Gastrocnemius medialis (tissue), 4 donors: ENCODE measurements at regions of chr6 and their contacts with region 1.

Region 1: DNA sequence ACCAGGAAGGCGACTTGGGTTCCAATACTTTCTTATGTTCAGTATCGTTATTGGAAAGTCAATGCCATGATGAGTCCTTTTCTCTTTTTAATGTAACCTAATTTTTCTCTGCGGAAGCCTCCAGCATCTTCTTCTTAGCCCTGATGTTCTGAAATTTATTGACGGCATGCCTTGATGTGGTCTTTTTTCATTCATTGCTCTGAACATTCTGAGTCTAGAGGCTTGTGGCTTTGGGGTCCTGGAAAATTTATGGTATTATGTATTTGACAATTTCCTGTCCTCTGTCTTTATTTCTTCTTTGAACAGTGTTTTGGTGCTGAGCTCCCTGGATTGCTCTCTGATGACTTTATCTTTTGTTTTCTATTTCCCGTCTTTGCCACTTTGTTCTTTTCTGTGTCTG is 28.7 kb upstream of the MAS1 start:
- DNase-seq: no peak
- ATAC-seq: no peak
- H3K4me3 ChIP-seq: no peak overlapping the region
- H3K27ac ChIP-seq: no peak overlapping the region
- H3K4me1 ChIP-seq: peaks cover 0 to 3% of the 10 kb centered on the region in 2 donors
- H3K27me3 ChIP-seq: no peaks in the 10 kb centered on the region
- CTCF ChIP-seq: no peak
- POLR2A ChIP-seq: no peak

Region 2: GRCh38 chr6:158808941-158809678 is 1053.0 kb before region 1 on chr6:
- in situ Hi-C with region 1: no loop called
- intact Hi-C with region 1: no loop called
- DNase-seq: no peak
- ATAC-seq: peak in 1 of 2 donors; percentile 43
- H3K4me3 ChIP-seq: no peak overlapping the region
- H3K27ac ChIP-seq: no peak overlapping the region
- H3K4me1 ChIP-seq: peaks cover 0 to 15% of the 10 kb centered on the region in 2 donors
- H3K27me3 ChIP-seq: no peaks in the 10 kb centered on the region
- CTCF ChIP-seq: no peak
- POLR2A ChIP-seq: no peak

Region 3: DNA sequence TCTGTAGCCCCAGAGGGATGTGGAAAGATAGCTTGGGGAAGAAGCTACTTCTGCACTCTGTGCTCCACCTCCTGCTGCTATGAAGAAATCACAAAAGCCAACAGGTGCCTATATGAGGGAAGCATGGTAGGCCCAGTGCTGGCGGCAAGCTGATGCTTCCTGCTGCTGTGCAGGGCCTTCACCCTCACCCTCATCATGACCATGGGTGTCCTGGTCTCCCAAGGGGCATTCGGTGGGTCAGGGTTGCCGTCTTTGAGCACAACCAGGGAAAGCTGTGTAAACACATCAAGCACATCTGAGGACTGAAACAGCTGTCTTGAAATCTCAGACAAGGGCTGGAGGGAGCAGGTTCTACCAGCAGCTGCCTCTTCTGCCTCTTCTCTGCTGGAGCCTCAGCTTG is 508.9 kb before region 1 on chr6:
- in situ Hi-C with region 1: no loop called
- intact Hi-C with region 1: no loop called
- DNase-seq: no peak
- ATAC-seq: no peak
- H3K4me3 ChIP-seq: no peak overlapping the region
- H3K27ac ChIP-seq: no peak overlapping the region
- H3K4me1 ChIP-seq: no peaks in the 10 kb centered on the region
- H3K27me3 ChIP-seq: peaks cover 0 to 4% (median 0%) of the 10 kb centered on the region in 3 donors
- CTCF ChIP-seq: no peak
- POLR2A ChIP-seq: no peak

Region 4: DNA sequence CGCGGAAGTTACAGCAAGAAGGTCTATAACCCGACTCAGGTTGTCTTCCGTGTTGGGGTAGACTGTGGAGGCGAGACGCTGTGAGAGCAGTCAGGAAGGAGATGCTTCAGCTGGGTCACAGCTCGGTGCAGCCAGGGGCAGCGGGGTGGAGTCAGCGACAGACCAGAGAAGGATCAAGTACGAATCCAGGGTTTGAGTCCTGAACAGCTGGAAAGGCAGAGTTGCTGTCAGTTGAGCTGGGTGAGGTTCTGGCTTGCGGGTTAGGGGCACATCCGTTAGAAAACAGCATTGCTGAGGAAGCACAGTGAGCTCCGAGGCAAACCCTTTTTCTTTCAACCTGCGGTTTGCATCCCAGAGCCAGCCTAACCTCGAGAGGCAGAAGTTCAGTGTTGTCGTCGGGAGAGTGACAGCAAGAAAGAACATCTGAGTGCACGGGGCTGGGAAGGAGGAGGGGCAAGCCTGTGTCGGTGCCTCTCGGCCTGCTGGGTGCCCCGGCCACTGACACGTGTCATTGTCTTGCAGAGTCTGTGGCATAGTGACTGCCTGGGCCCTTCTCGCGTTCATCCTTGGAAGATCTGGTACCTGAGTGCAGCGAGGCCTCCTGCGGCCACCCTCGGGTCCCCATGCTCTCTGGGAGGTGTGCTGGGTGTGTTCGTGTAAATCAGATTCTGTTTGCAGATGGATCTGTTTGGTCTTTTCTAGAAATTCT is 42.0 kb before region 1 on chr6:
- in situ Hi-C with region 1: no loop called
- intact Hi-C with region 1: no loop called
- DNase-seq: no peak
- ATAC-seq: no peak
- H3K4me3 ChIP-seq: no peak overlapping the region
- H3K27ac ChIP-seq: no peak overlapping the region
- H3K4me1 ChIP-seq: no peaks in the 10 kb centered on the region
- H3K27me3 ChIP-seq: no peaks in the 10 kb centered on the region
- CTCF ChIP-seq: no peak
- POLR2A ChIP-seq: no peak

Region 5: DNA sequence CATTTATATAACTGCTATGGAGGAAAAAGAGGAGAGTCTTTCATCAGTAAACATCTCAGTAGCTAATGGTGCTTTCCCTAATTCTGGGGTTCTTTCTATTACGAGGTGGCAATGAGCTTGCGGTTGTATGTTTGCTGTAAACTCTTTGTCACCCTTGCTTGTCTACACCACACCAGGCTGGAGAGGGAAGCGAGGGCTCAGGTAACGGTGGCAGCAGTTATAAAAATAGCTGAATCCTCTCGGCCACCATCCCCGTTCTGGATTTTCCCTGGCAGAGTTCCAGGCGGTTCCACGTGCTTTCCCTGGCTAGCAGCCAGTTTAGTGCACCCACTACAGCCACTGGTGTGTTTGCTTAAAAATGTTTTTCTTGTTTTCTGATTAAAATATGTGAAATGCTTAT is 67.7 kb after region 1 on chr6:
- in situ Hi-C with region 1: loop called in 1 of 4 experiments (anchors 10 kb)
- intact Hi-C with region 1: no loop called
- DNase-seq: no peak
- ATAC-seq: no peak
- H3K4me3 ChIP-seq: no peak overlapping the region
- H3K27ac ChIP-seq: no peak overlapping the region
- H3K4me1 ChIP-seq: peaks cover 5 to 9% of the 10 kb centered on the region in 2 donors
- H3K27me3 ChIP-seq: no peaks in the 10 kb centered on the region
- CTCF ChIP-seq: no peak
- POLR2A ChIP-seq: no peak

Region 6: DNA sequence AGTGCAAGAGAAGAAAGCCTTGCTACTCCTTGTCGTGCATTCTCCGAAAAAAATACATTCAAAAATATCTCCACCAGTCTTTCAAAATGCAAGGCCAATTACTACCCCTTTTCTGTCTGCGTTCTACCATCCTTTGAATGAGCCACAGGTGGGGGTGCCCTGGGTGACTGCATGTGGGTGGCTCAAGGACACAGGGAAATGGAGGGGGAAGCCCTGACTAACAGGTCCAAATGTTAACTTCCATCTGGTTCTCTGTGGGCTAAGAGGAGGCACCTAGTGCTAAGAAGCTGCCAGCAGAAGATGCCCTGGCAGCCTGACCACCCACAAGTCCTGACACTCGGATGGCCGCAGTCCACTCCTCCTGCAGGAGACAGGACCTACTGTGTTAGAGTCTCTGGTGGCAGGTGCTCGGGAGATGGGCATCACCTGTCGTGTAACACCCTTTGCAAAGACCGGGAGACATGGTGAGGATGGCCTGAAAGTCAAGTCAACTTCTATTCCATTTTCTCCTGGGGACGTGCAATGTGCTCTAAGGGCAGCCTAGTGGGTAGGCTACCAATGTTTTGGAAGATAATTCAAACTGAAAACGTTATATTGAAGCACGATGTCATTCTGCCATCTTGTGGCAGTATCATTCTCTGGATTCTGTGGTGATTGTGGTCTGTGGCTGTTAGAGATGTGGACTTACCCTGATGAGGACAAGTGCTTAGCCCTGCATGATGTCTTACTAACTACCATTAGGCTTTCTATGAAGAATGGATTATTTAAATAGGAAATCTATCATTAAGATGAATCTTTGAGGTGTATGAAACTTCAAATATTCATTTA is 79.4 kb after region 1 on chr6:
- in situ Hi-C with region 1: loop called in 2 of 4 experiments (anchors 5 to 10 kb)
- intact Hi-C with region 1: loop called (anchors 1 kb)
- DNase-seq: no peak
- ATAC-seq: peak; percentile 36 to 62
- H3K4me3 ChIP-seq: no peak overlapping the region
- H3K27ac ChIP-seq: no peak overlapping the region
- H3K4me1 ChIP-seq: peaks cover 0 to 6% of the 10 kb centered on the region in 2 donors
- H3K27me3 ChIP-seq: no peaks in the 10 kb centered on the region
- CTCF ChIP-seq: peak in 4 of 5 experiments; percentile 33 to 58 (median 54)
- POLR2A ChIP-seq: no peak

Region 7: GRCh38 chr6:160088069-160088783 is 226.1 kb after region 1 on chr6:
- in situ Hi-C with region 1: loop called in 1 of 4 experiments (anchors 25 kb)
- intact Hi-C with region 1: loop called (anchors 10 kb)
- DNase-seq: peak in 1 of 2 donors; percentile 65
- ATAC-seq: peak; percentile 66 to 84
- H3K4me3 ChIP-seq: no peak overlapping the region
- H3K27ac ChIP-seq: peak overlapping the region in 3 of 4 donors; percentile 25 to 58 (median 30)
- H3K4me1 ChIP-seq: no peaks in the 10 kb centered on the region
- H3K27me3 ChIP-seq: no peaks in the 10 kb centered on the region
- CTCF ChIP-seq: peak; percentile 48 to 59 (median 53)
- POLR2A ChIP-seq: no peak